ENCODE measurements at regions of chr22 and their contacts with region 1.

Region 1: DNA sequence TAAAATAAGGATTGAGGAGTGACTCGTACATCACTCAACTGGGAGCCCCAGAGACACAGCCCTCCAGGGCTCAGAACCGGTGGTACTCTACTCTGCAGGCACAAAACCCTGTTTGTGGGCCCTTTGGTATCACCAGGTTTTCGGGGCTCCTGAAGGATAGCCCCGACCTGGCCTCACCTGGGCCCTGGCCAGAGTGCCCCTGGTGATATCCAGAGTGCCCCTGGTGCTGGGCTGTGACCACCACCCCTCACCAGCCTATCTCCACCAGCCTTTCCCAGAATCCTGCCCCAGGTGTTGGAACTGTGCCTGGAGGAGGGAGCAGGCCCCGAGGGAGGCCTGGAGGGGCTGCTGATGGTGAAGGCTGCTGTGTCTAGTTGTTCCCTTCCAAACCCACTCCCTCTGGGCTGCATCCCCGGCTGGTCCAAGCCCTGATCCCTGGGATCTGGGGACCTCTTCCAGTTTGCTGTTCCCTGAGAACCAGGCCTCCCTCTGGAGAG is 2.2 kb upstream of the GGT5 start:
- DNase-seq: no peak
- ATAC-seq: peak; percentile 38
- H3K4me3 ChIP-seq: no peak overlapping the region
- H3K27ac ChIP-seq: peak overlapping the region; percentile 55
- H3K4me1 ChIP-seq: peaks cover 24 to 35% of the 10 kb centered on the region in 2 experiments
- H3K27me3 ChIP-seq: no peaks in the 10 kb centered on the region
- CTCF ChIP-seq: no peak
- POLR2A ChIP-seq: no peak
- RAD21 ChIP-seq: no peak

Region 2: GRCh38 chr22:24189249-24190158 is 57.6 kb before region 1 on chr22:
- CTCF ChIA-PET with region 1: interaction called, 95 read pairs
- POLR2A ChIA-PET with region 1: interaction called, 4 read pairs
- RAD21 ChIA-PET with region 1: interaction called, 39 to 42 read pairs
- intact Hi-C with region 1: loop called (anchors 1 kb)
- DNase-seq: no peak
- ATAC-seq: peak; percentile 93
- H3K4me3 ChIP-seq: no peak overlapping the region
- H3K27ac ChIP-seq: peak overlapping the region; percentile 74
- H3K4me1 ChIP-seq: peaks cover 35 to 36% of the 10 kb centered on the region in 2 experiments
- H3K27me3 ChIP-seq: no peaks in the 10 kb centered on the region
- CTCF ChIP-seq: peak; percentile 90 to 96 (median 94)
- POLR2A ChIP-seq: no peak
- RAD21 ChIP-seq: peak; percentile 100

Region 3: GRCh38 chr22:24200616-24201212 is 46.3 kb before region 1 on chr22:
- CTCF ChIA-PET with region 1: interaction called, 11 read pairs
- POLR2A ChIA-PET with region 1: interaction called, 5 read pairs
- RAD21 ChIA-PET with region 1: interaction called, 3 read pairs
- intact Hi-C with region 1: no loop called
- DNase-seq: peak; percentile 67
- ATAC-seq: peak; percentile 64
- H3K4me3 ChIP-seq: peak overlapping the region in 1 of 2 experiments; percentile 29; a peak in 2 of 4 replicates
- H3K27ac ChIP-seq: peak overlapping the region; percentile 100
- H3K4me1 ChIP-seq: peaks cover 92 to 95% of the 10 kb centered on the region in 2 experiments
- H3K27me3 ChIP-seq: no peaks in the 10 kb centered on the region
- CTCF ChIP-seq: no peak
- POLR2A ChIP-seq: no peak
- RAD21 ChIP-seq: no peak